Esophagus squamous epithelium (tissue), 5 donors: ENCODE measurements at regions of chr11 and their contacts with region 1.

Region 1: GRCh38 chr11:93784152-93784934 is at the start of gene MED17:
- DNase-seq: peak; percentile 52
- H3K4me3 ChIP-seq: peak within 1 kb of the TSS; percentile 79 to 99 (median 88)
- H3K27ac ChIP-seq: peak within 1 kb of the TSS; percentile 90 to 97 (median 94)
- H3K4me1 ChIP-seq: peaks cover 5 to 42% (median 28%) of the 10 kb centered on the region in 3 donors
- H3K27me3 ChIP-seq: no peaks in the 10 kb centered on the region
- CTCF ChIP-seq: peak; percentile 33 to 63 (median 46)
- POLR2A ChIP-seq: peak in 3 of 4 donors; percentile 78 to 89 (median 81)
- total RNA-seq, gene MED17: 11.3 to 25.9 (median 17.1) TPM

Region 2: DNA sequence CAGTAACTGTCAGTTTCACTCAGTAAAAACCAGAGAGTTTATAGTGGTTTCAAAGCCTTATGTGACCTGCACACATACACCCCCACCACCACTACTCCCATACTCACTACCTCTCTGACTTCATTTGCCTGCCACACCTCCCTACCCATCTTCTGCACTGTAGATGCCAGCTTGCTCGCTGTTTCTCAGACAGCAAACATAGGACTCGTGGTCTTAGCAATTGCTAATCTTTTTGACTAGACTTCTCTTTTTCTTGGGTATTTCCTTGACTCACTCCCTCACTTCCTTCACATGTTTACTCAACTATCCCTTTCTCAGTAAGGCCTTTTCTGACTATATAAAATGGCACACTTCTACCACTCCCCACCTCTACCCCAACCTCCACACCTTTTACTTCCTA is 95.1 kb before region 1 on chr11:
- intact Hi-C with region 1: no loop called
- DNase-seq: no peak
- H3K4me3 ChIP-seq: no peak overlapping the region
- H3K27ac ChIP-seq: no peak overlapping the region
- H3K4me1 ChIP-seq: no peaks in the 10 kb centered on the region
- H3K27me3 ChIP-seq: no peaks in the 10 kb centered on the region
- CTCF ChIP-seq: no peak
- POLR2A ChIP-seq: no peak

Region 3: GRCh38 chr11:93747122-93747521 is 37.2 kb before region 1 on chr11:
- intact Hi-C with region 1: loop called (anchors 5 kb)
- DNase-seq: no peak
- H3K4me3 ChIP-seq: no peak overlapping the region
- H3K27ac ChIP-seq: no peak overlapping the region
- H3K4me1 ChIP-seq: peaks cover 0 to 8% (median 5%) of the 10 kb centered on the region in 3 donors
- H3K27me3 ChIP-seq: no peaks in the 10 kb centered on the region
- CTCF ChIP-seq: no peak
- POLR2A ChIP-seq: no peak